Panc1 (cell line): ENCODE measurements at regions of chr19 and their contacts with region 1.

Region 1: GRCh38 chr19:10936661-10937084 is 8.1 kb downstream of the TIMM29 start:
- DNase-seq: peak; percentile 57
- ATAC-seq: peak; percentile 79
- H3K4me3 ChIP-seq: no peak overlapping the region
- H3K27ac ChIP-seq: no peak overlapping the region
- H3K4me1 ChIP-seq: peaks cover 5% of the 10 kb centered on the region
- H3K27me3 ChIP-seq: no peaks in the 10 kb centered on the region
- CTCF ChIP-seq: peak; percentile 80

Region 2: DNA sequence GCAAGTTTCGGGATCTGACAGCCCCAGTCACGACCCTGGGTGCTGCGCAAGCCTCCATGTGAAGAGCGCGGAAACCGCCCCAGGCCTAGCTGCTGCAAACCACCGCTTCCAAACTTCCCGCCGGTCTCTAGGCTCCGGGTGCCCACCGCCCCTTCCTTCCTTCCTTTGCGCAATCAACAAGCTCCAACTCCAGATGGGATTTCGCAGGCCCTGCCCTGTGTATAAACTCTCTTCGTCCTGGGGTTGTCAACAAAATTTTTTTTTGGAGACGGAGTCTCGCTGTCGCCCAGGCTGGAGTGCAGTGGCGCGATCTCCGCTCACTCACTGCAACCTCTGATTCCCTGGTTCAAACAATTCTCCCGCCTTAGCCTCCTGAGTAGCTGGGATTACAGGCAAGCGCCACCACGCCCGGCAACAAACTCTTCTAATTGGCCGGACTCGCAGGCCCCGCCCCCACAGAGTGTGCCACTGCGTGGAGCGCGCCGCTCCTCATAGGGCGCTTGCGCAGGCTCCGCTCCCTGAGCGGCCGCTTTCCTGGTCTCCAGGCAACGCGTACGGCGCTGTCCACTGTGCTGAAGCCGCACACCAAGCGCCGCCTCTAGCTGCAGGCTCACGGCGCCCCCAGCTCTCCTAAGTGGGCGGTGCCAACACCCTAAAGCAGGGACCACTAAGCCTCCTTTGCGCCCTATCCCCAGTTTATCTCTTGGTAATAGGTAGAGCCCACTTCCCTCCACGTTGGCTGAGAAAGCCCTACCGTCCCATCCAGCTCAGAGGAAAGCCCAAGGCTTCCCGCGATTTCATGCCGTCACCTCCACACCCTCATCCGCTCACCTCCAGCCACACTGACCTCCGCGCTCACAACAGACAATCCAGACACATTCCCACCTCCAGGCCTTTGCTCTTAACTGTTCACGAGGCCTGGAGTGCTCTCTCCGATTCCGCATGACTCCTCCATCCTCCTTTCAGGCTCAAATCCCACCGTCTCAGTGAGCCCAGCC is 241.0 kb before region 1 on chr19:
- CTCF ChIA-PET with region 1: no interaction called
- POLR2A ChIA-PET with region 1: interaction called, 11 read pairs
- in situ Hi-C with region 1: no loop called
- intact Hi-C with region 1: no loop called
- DNase-seq: no peak
- ATAC-seq: peak; percentile 95
- H3K4me3 ChIP-seq: peak overlapping the region; percentile 21 to 40
- H3K27ac ChIP-seq: no peak overlapping the region
- H3K4me1 ChIP-seq: peaks cover 4% of the 10 kb centered on the region
- H3K27me3 ChIP-seq: no peaks in the 10 kb centered on the region
- CTCF ChIP-seq: no peak

Region 3: DNA sequence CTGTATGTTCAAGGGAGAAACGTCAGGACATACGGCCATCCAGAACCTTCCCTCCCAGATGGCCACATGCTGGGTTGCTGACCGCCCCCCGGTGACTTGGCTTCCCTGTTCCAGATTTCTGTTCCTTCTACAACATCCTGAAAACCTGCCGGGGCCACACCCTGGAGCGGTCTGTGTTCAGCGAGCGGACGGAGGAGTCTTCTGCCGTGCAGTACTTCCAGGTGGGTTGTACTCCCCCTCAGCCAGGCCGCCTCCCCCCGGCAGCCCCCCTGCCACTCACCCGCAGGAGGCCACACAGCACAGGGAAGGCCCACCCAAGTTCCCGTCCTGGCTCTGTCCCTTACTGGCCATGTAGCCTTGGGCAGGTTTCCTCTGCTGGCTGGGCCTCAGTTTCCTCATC is 28.7 kb before region 1 on chr19:
- CTCF ChIA-PET with region 1: no interaction called
- POLR2A ChIA-PET with region 1: no interaction called
- in situ Hi-C with region 1: no loop called
- intact Hi-C with region 1: no loop called
- DNase-seq: no peak
- ATAC-seq: no peak
- H3K4me3 ChIP-seq: no peak overlapping the region
- H3K27ac ChIP-seq: no peak overlapping the region
- H3K4me1 ChIP-seq: no peaks in the 10 kb centered on the region
- H3K27me3 ChIP-seq: no peaks in the 10 kb centered on the region
- CTCF ChIP-seq: no peak

Region 4: DNA sequence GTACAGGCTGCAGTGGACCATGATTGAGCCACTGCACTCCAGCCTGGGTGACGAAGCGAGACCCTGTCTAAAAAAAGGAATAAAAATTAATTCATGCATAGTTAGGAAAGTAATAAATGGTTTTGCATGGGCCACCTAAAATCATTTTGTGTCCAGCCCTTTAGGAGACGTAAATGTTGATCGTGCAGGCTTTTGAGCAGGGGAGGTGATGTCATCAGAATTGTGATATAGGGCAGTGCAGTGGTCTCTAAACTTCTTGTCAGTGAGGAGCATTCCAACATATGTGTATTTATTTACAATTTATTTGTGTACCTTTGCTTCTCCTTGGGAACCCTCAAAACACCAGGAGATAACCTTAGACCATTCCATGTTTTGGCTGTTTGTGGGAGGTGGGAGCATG is 27.2 kb after region 1 on chr19:
- CTCF ChIA-PET with region 1: interaction called, 6 read pairs
- POLR2A ChIA-PET with region 1: interaction called, 10 read pairs
- in situ Hi-C with region 1: no loop called
- intact Hi-C with region 1: no loop called
- DNase-seq: no peak
- ATAC-seq: no peak
- H3K4me3 ChIP-seq: no peak overlapping the region
- H3K27ac ChIP-seq: no peak overlapping the region
- H3K4me1 ChIP-seq: peaks cover 18% of the 10 kb centered on the region
- H3K27me3 ChIP-seq: no peaks in the 10 kb centered on the region
- CTCF ChIP-seq: no peak

Region 5: DNA sequence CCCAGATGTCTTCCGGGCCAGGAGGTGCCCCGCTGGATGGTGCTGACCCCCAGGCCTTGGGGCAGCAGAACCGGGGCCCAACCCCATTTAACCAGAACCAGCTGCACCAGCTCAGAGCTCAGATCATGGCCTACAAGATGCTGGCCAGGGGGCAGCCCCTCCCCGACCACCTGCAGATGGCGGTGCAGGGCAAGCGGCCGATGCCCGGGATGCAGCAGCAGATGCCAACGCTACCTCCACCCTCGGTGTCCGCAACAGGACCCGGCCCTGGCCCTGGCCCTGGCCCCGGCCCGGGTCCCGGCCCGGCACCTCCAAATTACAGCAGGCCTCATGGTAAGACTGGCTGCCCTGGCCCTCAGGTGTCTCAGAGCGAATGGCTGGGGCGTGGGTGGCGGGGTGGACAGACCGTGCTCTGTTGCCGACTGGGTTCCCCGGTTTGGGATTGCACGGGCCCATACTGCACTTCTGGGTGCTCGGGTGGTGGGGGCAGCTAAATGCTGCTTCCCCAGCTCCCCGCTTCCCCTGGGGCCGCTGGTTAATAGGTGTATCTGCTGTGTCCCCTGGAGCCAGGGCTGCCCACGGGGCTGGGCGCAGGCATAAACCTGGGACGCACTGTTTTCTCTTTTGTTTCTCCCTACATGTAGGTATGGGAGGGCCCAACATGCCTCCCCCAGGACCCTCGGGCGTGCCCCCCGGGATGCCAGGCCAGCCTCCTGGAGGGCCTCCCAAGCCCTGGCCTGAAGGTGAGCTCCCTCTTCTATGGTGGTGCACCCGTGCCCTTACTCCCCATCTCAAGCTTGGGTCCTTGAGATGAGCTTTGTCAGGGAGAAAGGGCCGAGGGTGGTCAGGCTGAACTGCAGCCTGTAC is 49.8 kb after region 1 on chr19:
- CTCF ChIA-PET with region 1: interaction called, 10 read pairs
- POLR2A ChIA-PET with region 1: no interaction called
- in situ Hi-C with region 1: no loop called
- intact Hi-C with region 1: no loop called
- DNase-seq: no peak
- ATAC-seq: no peak
- H3K4me3 ChIP-seq: no peak overlapping the region
- H3K27ac ChIP-seq: no peak overlapping the region
- H3K4me1 ChIP-seq: no peaks in the 10 kb centered on the region
- H3K27me3 ChIP-seq: no peaks in the 10 kb centered on the region
- CTCF ChIP-seq: no peak

Region 6: DNA sequence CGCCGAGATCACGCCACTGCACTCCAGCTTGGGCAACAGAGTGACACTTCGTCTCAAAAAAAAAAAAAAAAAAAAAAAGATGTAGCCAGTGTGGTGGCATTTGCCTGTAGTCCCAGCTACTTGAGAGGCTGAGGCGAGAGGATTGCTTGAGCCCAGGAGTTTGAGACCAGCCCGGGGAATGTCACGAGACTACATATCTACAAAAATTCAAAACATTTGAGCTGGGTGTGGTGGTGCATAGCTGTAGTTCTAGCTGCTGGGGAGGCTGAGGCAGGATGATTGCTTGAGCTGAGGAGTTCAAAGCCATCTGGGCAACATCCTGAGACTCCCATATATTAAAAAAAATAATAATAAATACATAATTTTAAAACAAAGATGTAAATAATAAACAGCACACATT is 70.7 kb after region 1 on chr19:
- CTCF ChIA-PET with region 1: interaction called, 10 read pairs
- POLR2A ChIA-PET with region 1: interaction called, 7 read pairs
- in situ Hi-C with region 1: no loop called
- intact Hi-C with region 1: no loop called
- DNase-seq: no peak
- ATAC-seq: no peak
- H3K4me3 ChIP-seq: no peak overlapping the region
- H3K27ac ChIP-seq: no peak overlapping the region
- H3K4me1 ChIP-seq: no peaks in the 10 kb centered on the region
- H3K27me3 ChIP-seq: no peaks in the 10 kb centered on the region
- CTCF ChIP-seq: no peak